ENCODE measurements at regions of chr15 and their contacts with region 1.

Region 1: GRCh38 chr15:60507596-60508424 is 28.9 kb upstream of the ICE2 start:
- DNase-seq: peak; percentile 64
- H3K4me3 Mint-ChIP-seq: no peak overlapping the region
- H3K27ac Mint-ChIP-seq: peak overlapping the region; percentile 84
- H3K4me1 Mint-ChIP-seq: peaks cover 41% of the 10 kb centered on the region
- H3K27me3 Mint-ChIP-seq: no peaks in the 10 kb centered on the region

Region 2: DNA sequence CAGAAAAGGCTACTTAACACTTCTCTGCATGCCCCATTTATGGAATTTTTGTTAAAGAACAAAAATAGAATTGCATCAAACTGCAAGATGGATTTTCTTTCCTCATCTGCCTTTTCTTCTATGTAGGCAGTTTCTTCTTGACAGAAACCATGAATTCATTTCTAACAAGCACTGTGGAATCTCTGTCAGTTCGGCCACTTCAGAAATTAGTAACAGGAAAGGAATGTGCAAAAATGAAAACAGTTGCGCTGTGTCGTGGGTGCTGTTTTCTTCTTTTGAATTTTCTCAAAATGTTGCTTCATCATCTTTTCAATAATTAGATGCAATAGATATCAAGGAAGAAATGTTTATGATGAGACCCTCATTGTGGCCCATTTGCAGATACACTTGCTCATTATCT is 352.1 kb before region 1 on chr15:
- CTCF ChIA-PET with region 1: no interaction called
- DNase-seq: no peak
- H3K4me3 Mint-ChIP-seq: no peak overlapping the region
- H3K27ac Mint-ChIP-seq: no peak overlapping the region
- H3K4me1 Mint-ChIP-seq: peaks cover 4% of the 10 kb centered on the region
- H3K27me3 Mint-ChIP-seq: peaks cover 15% of the 10 kb centered on the region

Region 3: GRCh38 chr15:60179786-60180391 is 327.9 kb before region 1 on chr15:
- CTCF ChIA-PET with region 1: no interaction called
- DNase-seq: peak; percentile 54
- H3K4me3 Mint-ChIP-seq: no peak overlapping the region
- H3K27ac Mint-ChIP-seq: no peak overlapping the region
- H3K4me1 Mint-ChIP-seq: no peaks in the 10 kb centered on the region
- H3K27me3 Mint-ChIP-seq: peaks cover 29% of the 10 kb centered on the region

Region 4: GRCh38 chr15:60315878-60316277 is 191.9 kb before region 1 on chr15:
- CTCF ChIA-PET with region 1: no interaction called
- DNase-seq: no peak
- H3K4me3 Mint-ChIP-seq: no peak overlapping the region
- H3K27ac Mint-ChIP-seq: no peak overlapping the region
- H3K4me1 Mint-ChIP-seq: no peaks in the 10 kb centered on the region
- H3K27me3 Mint-ChIP-seq: peaks cover 13% of the 10 kb centered on the region

Region 5: GRCh38 chr15:60362321-60363086 is 145.3 kb before region 1 on chr15:
- CTCF ChIA-PET with region 1: interaction called, 11 read pairs
- DNase-seq: peak; percentile 48
- H3K4me3 Mint-ChIP-seq: no peak overlapping the region
- H3K27ac Mint-ChIP-seq: peak overlapping the region; percentile 80
- H3K4me1 Mint-ChIP-seq: peaks cover 33% of the 10 kb centered on the region
- H3K27me3 Mint-ChIP-seq: no peaks in the 10 kb centered on the region

Region 6: GRCh38 chr15:60551781-60552161 is 44.0 kb after region 1 on chr15:
- CTCF ChIA-PET with region 1: interaction called, 11 read pairs
- DNase-seq: no peak
- H3K4me3 Mint-ChIP-seq: no peak overlapping the region
- H3K27ac Mint-ChIP-seq: peak overlapping the region; percentile 85
- H3K4me1 Mint-ChIP-seq: peaks cover 85% of the 10 kb centered on the region
- H3K27me3 Mint-ChIP-seq: no peaks in the 10 kb centered on the region

Region 7: DNA sequence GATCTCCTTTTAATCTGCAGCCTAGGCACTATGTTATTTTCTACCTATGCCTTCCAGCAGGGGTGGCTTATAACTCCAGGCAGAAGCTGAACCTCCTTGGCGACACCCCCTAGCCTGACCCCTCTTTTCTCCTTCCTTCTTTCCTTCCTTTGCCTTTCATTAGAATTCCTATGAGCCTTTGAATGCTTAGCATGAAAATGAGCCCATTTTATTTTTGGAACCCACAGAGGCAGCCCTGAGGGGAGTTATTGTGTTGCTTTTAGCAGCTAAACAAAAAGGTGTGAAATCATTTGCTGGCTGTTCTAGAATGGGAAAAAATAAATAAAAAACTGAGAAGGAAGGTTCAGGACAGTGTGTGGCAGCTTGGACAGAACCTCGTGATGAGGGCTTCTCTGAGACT is 135.7 kb after region 1 on chr15:
- CTCF ChIA-PET with region 1: no interaction called
- DNase-seq: no peak
- H3K4me3 Mint-ChIP-seq: no peak overlapping the region
- H3K27ac Mint-ChIP-seq: no peak overlapping the region
- H3K4me1 Mint-ChIP-seq: peaks cover 7% of the 10 kb centered on the region
- H3K27me3 Mint-ChIP-seq: peaks cover 6% of the 10 kb centered on the region

Region 8: DNA sequence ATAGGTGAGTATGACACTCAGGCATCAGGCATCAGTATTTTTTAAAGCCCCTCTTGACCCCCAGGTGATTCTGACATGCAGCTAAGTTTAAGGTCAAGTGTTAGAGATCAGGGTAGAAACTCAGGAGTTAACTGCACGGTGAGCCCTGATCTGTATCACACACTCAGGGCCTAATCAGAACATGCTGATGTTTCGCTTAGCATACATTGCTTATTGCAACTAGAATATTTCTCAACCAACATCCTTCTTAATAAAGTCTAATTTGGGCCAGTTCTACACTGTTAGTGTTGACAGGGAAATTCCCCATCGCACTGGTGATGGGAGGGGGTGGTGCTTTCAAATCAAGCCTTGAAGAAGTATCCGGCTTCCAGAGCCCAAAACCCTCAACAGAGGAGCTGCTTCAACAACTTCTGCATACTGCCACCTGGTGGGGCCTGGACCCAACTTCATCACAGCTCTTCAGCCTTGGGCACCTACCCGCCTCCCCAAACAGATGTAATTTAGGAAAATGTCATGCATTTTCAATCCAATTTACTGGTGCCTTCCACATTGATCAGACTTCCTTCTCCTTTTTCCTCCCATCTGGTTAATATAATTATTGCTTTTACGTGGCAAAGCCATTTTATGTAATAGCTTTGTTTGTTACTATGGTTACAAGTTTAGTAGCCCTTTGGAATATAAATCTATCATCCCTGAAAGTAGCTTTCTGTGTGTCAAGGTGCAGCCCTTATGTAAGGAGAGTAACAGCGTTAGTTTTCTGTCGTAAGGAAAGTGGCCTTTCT is 409.1 kb after region 1 on chr15:
- CTCF ChIA-PET with region 1: interaction called, 21 read pairs
- DNase-seq: peak; percentile 91
- H3K4me3 Mint-ChIP-seq: no peak overlapping the region
- H3K27ac Mint-ChIP-seq: no peak overlapping the region
- H3K4me1 Mint-ChIP-seq: peaks cover 16% of the 10 kb centered on the region
- H3K27me3 Mint-ChIP-seq: peaks cover 5% of the 10 kb centered on the region

Region 9: DNA sequence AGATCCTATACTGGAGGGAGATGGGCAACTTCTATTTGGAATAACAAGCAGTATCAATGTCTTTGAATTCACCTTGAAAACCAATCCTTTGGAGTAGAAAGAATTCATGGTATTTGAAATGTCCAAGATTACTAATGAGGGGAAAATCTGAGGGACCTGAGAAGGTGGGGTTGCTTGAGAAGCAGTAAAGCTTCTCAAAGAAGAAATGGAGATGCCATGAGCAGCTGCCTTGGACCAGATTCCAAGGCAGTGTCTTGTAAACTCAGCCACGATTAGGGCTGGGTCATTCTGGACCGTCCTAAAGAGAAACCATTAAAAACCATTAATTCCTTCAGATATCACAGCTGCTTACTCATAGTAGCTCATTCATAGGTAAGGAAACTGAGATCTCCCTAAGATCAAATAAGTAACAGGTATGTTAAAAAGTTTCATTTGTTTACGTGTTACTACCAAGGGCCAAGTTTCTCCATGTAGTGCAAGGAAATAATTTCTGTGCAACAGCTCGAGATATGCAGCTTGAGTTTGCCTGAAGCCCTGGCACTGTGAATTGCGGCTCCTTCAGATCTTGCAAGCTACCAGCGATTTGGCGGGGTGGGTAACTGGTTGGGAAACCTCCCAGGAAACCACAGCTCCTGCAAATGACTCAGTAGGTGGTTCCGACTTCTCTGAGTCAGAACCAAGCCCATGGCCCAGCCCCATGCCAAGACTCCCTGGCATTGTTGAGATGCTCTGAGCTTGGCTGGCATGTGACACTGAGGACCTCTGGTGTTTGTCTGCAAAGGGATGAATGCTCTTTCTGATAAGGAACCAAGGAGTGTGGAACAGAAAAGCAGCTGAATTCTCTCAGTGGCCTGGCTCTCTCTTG is 424.5 kb after region 1 on chr15:
- CTCF ChIA-PET with region 1: interaction called, 13 read pairs
- DNase-seq: peak; percentile 54
- H3K4me3 Mint-ChIP-seq: no peak overlapping the region
- H3K27ac Mint-ChIP-seq: no peak overlapping the region
- H3K4me1 Mint-ChIP-seq: peaks cover 12% of the 10 kb centered on the region
- H3K27me3 Mint-ChIP-seq: peaks cover 46% of the 10 kb centered on the region

Measured in activated naive CD4-positive, alpha-beta T cell treated with anti-CD3 and anti-CD28 coated beads, Interleukin-2, amount 10 ng/mL, durations not matched to agents 7 days and 5 days (primary cell).